PC-9 (cell line): ENCODE measurements at regions of chr1 and their contacts with region 1.

Region 1: GRCh38 chr1:41038105-41038504 is 16.6 kb upstream of the SLFNL1 start:
- DNase-seq: no peak
- H3K4me3 ChIP-seq: no peak overlapping the region
- H3K27ac ChIP-seq: no peak overlapping the region
- H3K4me1 ChIP-seq: no peaks in the 10 kb centered on the region
- H3K27me3 ChIP-seq: no peaks in the 10 kb centered on the region
- CTCF ChIP-seq: no peak

Region 2: GRCh38 chr1:40849801-40850592 is 188.1 kb before region 1 on chr1:
- CTCF ChIA-PET with region 1: no interaction called
- POLR2A ChIA-PET with region 1: no interaction called
- intact Hi-C with region 1: no loop called
- DNase-seq: peak in 1 of 2 experiments; percentile 78
- H3K4me3 ChIP-seq: no peak overlapping the region
- H3K27ac ChIP-seq: no peak overlapping the region
- H3K4me1 ChIP-seq: no peaks in the 10 kb centered on the region
- H3K27me3 ChIP-seq: no peaks in the 10 kb centered on the region
- CTCF ChIP-seq: peak; percentile 93

Region 3: DNA sequence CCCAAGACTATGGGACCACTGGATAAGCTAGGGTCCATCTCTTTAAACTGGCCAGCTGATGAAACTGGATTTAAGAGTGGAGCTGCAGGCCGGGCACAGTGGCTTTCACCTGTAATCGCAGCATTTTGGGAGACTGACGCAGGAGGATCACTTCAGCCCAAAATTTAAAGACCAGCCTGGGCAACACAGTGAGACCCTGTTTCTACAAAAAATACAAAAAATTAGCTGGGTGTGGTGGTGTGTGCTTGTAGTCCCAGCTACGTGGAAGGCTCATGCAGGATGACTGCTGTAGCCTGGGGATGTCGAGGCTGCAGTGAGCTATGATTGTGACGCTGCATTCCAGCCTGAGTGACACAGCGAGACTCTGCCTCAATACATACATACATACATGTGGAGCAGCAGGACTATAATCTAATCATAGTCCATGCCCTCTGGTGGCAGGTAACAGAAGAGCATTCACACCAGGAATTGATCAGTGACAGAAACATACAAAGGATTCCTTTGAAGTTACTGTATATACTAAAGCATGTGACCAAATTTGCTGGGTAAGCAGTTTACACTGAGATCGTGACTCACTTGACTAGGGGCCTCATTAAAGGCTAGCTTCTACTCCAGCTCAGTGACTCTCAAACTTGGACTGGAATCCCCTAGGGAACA is 84.9 kb after region 1 on chr1:
- CTCF ChIA-PET with region 1: no interaction called
- POLR2A ChIA-PET with region 1: no interaction called
- intact Hi-C with region 1: loop called (anchors 5 kb)
- DNase-seq: peak in 1 of 2 experiments; percentile 76
- H3K4me3 ChIP-seq: no peak overlapping the region
- H3K27ac ChIP-seq: no peak overlapping the region
- H3K4me1 ChIP-seq: peaks cover 6% of the 10 kb centered on the region; the same call in 1 of the 2 replicates
- H3K27me3 ChIP-seq: no peaks in the 10 kb centered on the region
- CTCF ChIP-seq: peak; percentile 73